ENCODE measurements at regions of chr7 and their contacts with region 1.

Region 1: DNA sequence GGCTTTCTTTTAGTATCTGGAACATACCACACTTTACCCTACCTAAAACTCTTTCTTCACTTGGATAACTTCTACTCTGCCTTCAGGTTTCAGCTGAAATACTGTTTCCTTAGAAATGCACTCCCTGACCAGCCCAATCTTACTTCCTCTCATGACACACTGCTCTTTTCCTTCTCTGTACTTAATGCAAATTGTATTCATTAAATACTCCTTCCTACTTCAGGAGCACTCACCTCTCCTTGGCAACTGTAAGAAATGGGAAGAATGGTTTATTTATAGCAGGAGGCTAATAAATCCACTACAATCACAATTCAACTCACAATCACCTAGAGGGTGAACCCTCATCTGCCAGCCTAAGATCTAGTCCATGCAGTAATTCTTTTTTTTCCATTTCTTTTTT is 15.2 kb downstream of the ZCWPW1 start:
- DNase-seq: no peak
- H3K4me3 ChIP-seq: no peak overlapping the region
- H3K4me3 Mint-ChIP-seq: no peak overlapping the region
- H3K27ac ChIP-seq: peak overlapping the region in 1 of 2 donors; percentile 21
- H3K27ac Mint-ChIP-seq: peak overlapping the region; percentile 49 to 88 (median 84)
- H3K4me1 ChIP-seq: peaks cover 10 to 14% of the 10 kb centered on the region in 2 donors
- H3K4me1 Mint-ChIP-seq: peaks cover 10% of the 10 kb centered on the region
- H3K27me3 ChIP-seq: no peaks in the 10 kb centered on the region
- H3K27me3 Mint-ChIP-seq: peaks cover 0 to 4% (median 0%) of the 10 kb centered on the region in 3 donors
- CTCF ChIP-seq: no peak

Region 2: GRCh38 chr7:100137851-100138760 is 275.2 kb before region 1 on chr7:
- intact Hi-C with region 1: loop called in 1 of 2 experiments (anchors 5 kb)
- DNase-seq: no peak
- H3K4me3 ChIP-seq: no peak overlapping the region
- H3K4me3 Mint-ChIP-seq: no peak overlapping the region
- H3K27ac ChIP-seq: no peak overlapping the region
- H3K27ac Mint-ChIP-seq: peak overlapping the region in 1 of 7 donors; percentile 32
- H3K4me1 ChIP-seq: peaks cover 18 to 23% of the 10 kb centered on the region in 2 donors
- H3K4me1 Mint-ChIP-seq: peaks cover 21% of the 10 kb centered on the region
- H3K27me3 ChIP-seq: no peaks in the 10 kb centered on the region
- H3K27me3 Mint-ChIP-seq: peaks cover 4 to 12% (median 5%) of the 10 kb centered on the region in 3 donors
- CTCF ChIP-seq: no peak

Region 3: GRCh38 chr7:100171087-100171681 is 242.2 kb before region 1 on chr7:
- intact Hi-C with region 1: no loop called
- DNase-seq: no peak
- H3K4me3 ChIP-seq: peak overlapping the region in 1 of 3 experiments; percentile 40
- H3K4me3 Mint-ChIP-seq: peak overlapping the region in 1 of 2 donors; percentile 87
- H3K27ac ChIP-seq: no peak overlapping the region
- H3K27ac Mint-ChIP-seq: no peak overlapping the region
- H3K4me1 ChIP-seq: peaks cover 36 to 42% of the 10 kb centered on the region in 2 donors
- H3K4me1 Mint-ChIP-seq: peaks cover 43% of the 10 kb centered on the region
- H3K27me3 ChIP-seq: peaks cover 38 to 58% of the 10 kb centered on the region in 2 donors
- H3K27me3 Mint-ChIP-seq: peaks cover 64 to 74% (median 71%) of the 10 kb centered on the region in 3 donors
- CTCF ChIP-seq: no peak

Region 4: GRCh38 chr7:100380196-100380595 is 33.1 kb before region 1 on chr7:
- intact Hi-C with region 1: loop called in 1 of 2 experiments (anchors 5 kb)
- DNase-seq: peak; percentile 35 to 72 (median 57)
- H3K4me3 ChIP-seq: peak overlapping the region in 2 of 3 experiments; percentile 18 to 56
- H3K4me3 Mint-ChIP-seq: peak overlapping the region; percentile 59 to 77
- H3K27ac ChIP-seq: peak overlapping the region; percentile 78 to 79
- H3K27ac Mint-ChIP-seq: peak overlapping the region; percentile 83 to 97 (median 93)
- H3K4me1 ChIP-seq: peaks cover 96 to 100% of the 10 kb centered on the region in 2 donors
- H3K4me1 Mint-ChIP-seq: peaks cover 83% of the 10 kb centered on the region
- H3K27me3 ChIP-seq: no peaks in the 10 kb centered on the region
- H3K27me3 Mint-ChIP-seq: peaks cover 0 to 8% (median 2%) of the 10 kb centered on the region in 3 donors
- CTCF ChIP-seq: no peak

Region 5: GRCh38 chr7:100547872-100548271 is 134.5 kb after region 1 on chr7:
- intact Hi-C with region 1: no loop called
- DNase-seq: peak in 2 of 3 donors; percentile 25
- H3K4me3 ChIP-seq: no peak overlapping the region
- H3K4me3 Mint-ChIP-seq: no peak overlapping the region
- H3K27ac ChIP-seq: no peak overlapping the region
- H3K27ac Mint-ChIP-seq: peak overlapping the region in 3 of 7 donors; percentile 59 to 74 (median 63)
- H3K4me1 ChIP-seq: peaks cover 10 to 24% of the 10 kb centered on the region in 2 donors
- H3K4me1 Mint-ChIP-seq: peaks cover 20% of the 10 kb centered on the region
- H3K27me3 ChIP-seq: no peaks in the 10 kb centered on the region
- H3K27me3 Mint-ChIP-seq: peaks cover 0 to 2% (median 0%) of the 10 kb centered on the region in 3 donors
- CTCF ChIP-seq: no peak

Region 6: DNA sequence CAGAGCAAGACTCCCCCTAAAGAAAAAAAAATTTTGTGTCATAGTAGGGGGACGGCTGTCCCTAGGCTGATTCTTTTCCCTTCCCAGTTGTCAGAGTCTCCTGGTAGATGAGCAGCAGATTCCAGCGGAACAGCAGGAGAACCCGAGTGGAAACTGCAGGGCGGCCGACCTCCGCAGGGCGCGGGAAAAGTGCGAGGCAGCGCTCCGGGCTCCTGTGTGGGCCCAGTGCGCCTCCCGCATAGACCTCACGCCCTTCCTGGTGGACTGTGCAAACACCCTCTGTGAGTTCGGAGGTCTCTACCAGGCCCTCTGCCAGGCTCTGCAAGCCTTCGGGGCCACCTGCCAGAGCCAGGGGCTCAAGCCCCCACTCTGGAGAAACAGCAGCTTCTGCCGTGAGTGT is 366.0 kb after region 1 on chr7:
- intact Hi-C with region 1: no loop called
- DNase-seq: no peak
- H3K4me3 ChIP-seq: no peak overlapping the region
- H3K4me3 Mint-ChIP-seq: no peak overlapping the region
- H3K27ac ChIP-seq: no peak overlapping the region
- H3K27ac Mint-ChIP-seq: no peak overlapping the region
- H3K4me1 ChIP-seq: no peaks in the 10 kb centered on the region
- H3K4me1 Mint-ChIP-seq: no peaks in the 10 kb centered on the region
- H3K27me3 ChIP-seq: no peaks in the 10 kb centered on the region
- H3K27me3 Mint-ChIP-seq: peaks cover 7 to 21% (median 8%) of the 10 kb centered on the region in 3 donors
- CTCF ChIP-seq: no peak